Left colon (tissue), 2 donors: ENCODE measurements at regions of chr3 and their contacts with region 1.

Region 1: DNA sequence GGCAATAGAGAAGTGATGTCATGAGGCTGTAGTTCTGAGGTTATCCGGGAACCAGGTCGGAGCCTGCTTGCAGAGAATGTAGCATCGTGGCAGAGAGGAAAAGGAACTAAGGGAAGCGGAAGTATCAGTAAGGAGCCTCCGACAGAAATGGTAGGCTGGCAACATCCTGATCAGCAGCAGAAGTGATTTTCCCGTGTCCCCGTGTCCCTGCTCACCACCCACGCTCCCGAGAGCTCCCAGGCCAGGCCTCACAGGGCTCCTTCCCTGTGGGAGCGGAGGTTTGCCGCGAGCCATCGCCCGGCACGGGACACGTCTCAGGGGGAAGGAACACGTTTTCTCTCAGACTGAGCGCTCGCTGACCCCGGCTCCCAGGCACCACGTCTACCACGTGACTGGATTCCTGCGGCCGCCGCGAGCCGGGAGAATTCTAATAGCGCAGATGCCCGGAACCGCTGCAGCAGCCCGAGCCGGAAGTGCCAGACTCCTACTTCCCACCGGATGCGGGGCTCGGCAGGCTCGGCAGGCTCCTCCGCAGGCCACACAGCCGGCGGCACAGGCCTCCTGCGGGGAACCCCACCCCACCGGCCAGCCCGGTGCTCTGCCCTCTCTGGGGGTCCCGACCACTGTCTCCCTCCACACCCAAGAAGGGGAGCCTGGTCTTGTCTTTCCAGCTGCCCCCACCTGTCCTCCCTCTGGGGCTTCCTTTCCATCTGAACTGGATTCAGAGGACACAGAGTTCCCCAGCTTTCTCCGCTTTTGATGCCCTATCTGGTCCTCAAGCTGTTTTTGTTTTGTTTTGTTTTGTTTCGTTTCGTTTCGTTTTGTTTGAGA is 99.3 kb downstream of the BDH1 start:
- DNase-seq: peak; percentile 85 to 87
- ATAC-seq: peak; percentile 71

Region 2: GRCh38 chr3:197394464-197395321 is 61.8 kb before region 1 on chr3:
- intact Hi-C with region 1: loop called in 1 of 2 experiments (anchors 5 kb)
- DNase-seq: no peak
- ATAC-seq: no peak